HAP-1 (cell line): ENCODE measurements at regions of chr6 and their contacts with region 1.

Region 1: GRCh38 chr6:1596088-1596852 is 13.4 kb upstream of the FOXC1 start:
- DNase-seq: peak; percentile 44 to 73
- H3K4me3 ChIP-seq: no peak overlapping the region
- H3K4me1 ChIP-seq: no peaks in the 10 kb centered on the region
- H3K27me3 ChIP-seq: 0 out of 2 replicates have a peak, but pooled peaks cover 2% of the 10 kb centered on the region

Region 2: GRCh38 chr6:1242446-1242845 is 353.8 kb before region 1 on chr6:
- in situ Hi-C with region 1: no loop called
- DNase-seq: no peak
- H3K4me3 ChIP-seq: no peak overlapping the region
- H3K4me1 ChIP-seq: no peaks in the 10 kb centered on the region
- H3K27me3 ChIP-seq: peaks cover 2% of the 10 kb centered on the region; the same call in 1 of the 2 replicates

Region 3: DNA sequence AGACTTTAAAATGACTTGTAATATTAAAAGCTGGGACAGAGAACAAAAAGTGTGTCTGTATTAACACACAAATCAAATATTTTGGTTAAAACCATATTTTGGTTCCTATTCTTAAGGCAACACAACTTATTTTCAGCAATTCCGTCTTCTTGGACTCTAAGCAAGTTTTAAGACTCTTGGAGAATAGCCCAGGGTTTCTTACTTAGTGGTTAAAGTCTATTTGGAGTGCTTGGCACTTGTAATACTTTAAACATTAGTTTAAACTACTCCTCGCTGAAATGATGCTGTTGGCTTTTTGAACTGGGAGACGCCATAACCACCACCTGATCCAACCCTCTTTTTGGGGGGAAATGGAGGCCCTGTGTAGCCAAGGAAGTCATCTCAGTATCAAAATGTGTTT is 758.9 kb after region 1 on chr6:
- in situ Hi-C with region 1: loop called (anchors 5 kb)
- DNase-seq: no peak
- H3K4me3 ChIP-seq: no peak overlapping the region
- H3K4me1 ChIP-seq: no peaks in the 10 kb centered on the region
- H3K27me3 ChIP-seq: peaks cover 5% of the 10 kb centered on the region; the same call in 1 of the 2 replicates

Region 4: GRCh38 chr6:2450335-2450945 is 854.2 kb after region 1 on chr6:
- in situ Hi-C with region 1: loop called (anchors 25 kb)
- DNase-seq: peak in 1 of 2 experiments; percentile 55
- H3K4me3 ChIP-seq: no peak overlapping the region
- H3K4me1 ChIP-seq: no peaks in the 10 kb centered on the region
- H3K27me3 ChIP-seq: no peaks in the 10 kb centered on the region

Region 5: GRCh38 chr6:2634139-2634964 is 1038.1 kb after region 1 on chr6:
- in situ Hi-C with region 1: loop called (anchors 10 kb)
- DNase-seq: peak; percentile 70 to 93
- H3K4me3 ChIP-seq: no peak overlapping the region
- H3K4me1 ChIP-seq: peaks cover 9% of the 10 kb centered on the region
- H3K27me3 ChIP-seq: no peaks in the 10 kb centered on the region

Region 6: DNA sequence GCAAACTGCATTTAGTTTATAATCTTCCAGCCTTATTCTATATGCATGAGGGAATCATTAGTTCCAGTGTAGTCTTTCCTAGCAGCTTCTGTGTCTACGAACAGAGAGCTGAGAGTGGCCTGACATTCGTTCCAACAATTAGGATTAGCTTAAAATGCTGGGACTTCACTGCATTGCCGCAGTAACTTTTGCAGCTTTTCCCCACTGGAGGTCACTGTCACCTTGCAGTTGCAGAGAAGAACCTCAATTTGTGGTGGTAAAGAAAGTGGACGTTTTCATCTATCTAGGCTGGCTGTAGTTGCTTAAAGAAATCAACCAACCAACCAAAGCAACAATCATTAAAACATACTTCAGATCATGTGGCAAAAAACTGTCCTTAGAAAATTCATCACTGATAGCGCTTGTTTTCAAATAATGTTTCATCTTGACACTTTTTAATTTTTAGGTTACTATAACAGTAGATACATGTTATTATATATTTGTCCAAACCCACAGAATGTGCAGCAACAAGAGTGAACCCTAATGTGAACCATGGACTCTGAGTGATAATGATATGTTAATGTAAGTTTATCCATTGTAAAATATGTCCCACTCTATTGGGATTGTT is 1142.2 kb after region 1 on chr6:
- in situ Hi-C with region 1: loop called (anchors 25 kb)
- DNase-seq: peak; percentile 79
- H3K4me3 ChIP-seq: no peak overlapping the region
- H3K4me1 ChIP-seq: 0 out of 2 replicates have a peak, but pooled peaks cover 4% of the 10 kb centered on the region
- H3K27me3 ChIP-seq: no peaks in the 10 kb centered on the region